ENCODE measurements at regions of chr17 and their contacts with region 1.

Region 1: DNA sequence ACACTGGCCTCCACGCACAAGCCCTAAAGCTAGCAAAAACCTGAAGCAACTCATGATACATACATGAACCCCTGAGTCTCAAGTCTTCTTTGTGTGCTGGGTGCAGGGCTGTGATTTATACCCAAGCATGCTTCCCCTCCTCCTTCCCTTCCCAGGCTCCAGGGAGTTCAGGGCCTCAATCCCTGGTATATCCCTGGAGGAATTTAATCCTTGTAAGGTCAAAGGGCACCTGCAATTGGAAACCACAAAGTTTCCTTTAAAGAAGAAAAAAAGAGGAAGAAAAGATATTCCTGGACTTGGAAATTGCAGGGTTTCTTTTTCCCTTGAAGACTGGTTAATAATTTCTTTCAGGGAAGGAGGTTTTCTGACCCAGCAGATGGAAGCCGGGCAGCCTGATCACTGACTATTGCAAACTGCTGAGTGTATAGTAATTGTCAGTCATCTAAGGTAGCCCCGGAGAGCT is 182.3 kb downstream of the AATF start:
- DNase-seq: no peak
- H3K4me3 ChIP-seq: no peak overlapping the region
- H3K27ac ChIP-seq: no peak overlapping the region
- H3K4me1 ChIP-seq: no peaks in the 10 kb centered on the region
- H3K27me3 ChIP-seq: no peaks in the 10 kb centered on the region
- CTCF ChIP-seq: no peak

Region 2: GRCh38 chr17:37164057-37164456 is 33.0 kb after region 1 on chr17:
- CTCF ChIA-PET with region 1: no interaction called
- POLR2A ChIA-PET with region 1: no interaction called
- intact Hi-C with region 1: no loop called
- DNase-seq: no peak
- H3K4me3 ChIP-seq: no peak overlapping the region
- H3K27ac ChIP-seq: no peak overlapping the region
- H3K4me1 ChIP-seq: no peaks in the 10 kb centered on the region
- H3K27me3 ChIP-seq: no peaks in the 10 kb centered on the region
- CTCF ChIP-seq: no peak

Region 3: GRCh38 chr17:37220607-37220953 is 89.6 kb after region 1 on chr17:
- CTCF ChIA-PET with region 1: no interaction called
- POLR2A ChIA-PET with region 1: no interaction called
- intact Hi-C with region 1: no loop called
- DNase-seq: no peak
- H3K4me3 ChIP-seq: no peak overlapping the region
- H3K27ac ChIP-seq: peak overlapping the region; percentile 11; the same call in 1 of the 2 replicates
- H3K4me1 ChIP-seq: no peaks in the 10 kb centered on the region
- H3K27me3 ChIP-seq: no peaks in the 10 kb centered on the region
- CTCF ChIP-seq: no peak

Region 4: GRCh38 chr17:37676115-37676925 is 545.3 kb after region 1 on chr17:
- CTCF ChIA-PET with region 1: interaction called, 11 read pairs
- POLR2A ChIA-PET with region 1: no interaction called
- intact Hi-C with region 1: no loop called
- DNase-seq: no peak
- H3K4me3 ChIP-seq: no peak overlapping the region
- H3K27ac ChIP-seq: no peak overlapping the region
- H3K4me1 ChIP-seq: peaks cover 13% of the 10 kb centered on the region
- H3K27me3 ChIP-seq: no peaks in the 10 kb centered on the region
- CTCF ChIP-seq: no peak